Gastrocnemius medialis (tissue), 4 donors: ENCODE measurements at regions of chr17 and their contacts with region 1.

Region 1: DNA sequence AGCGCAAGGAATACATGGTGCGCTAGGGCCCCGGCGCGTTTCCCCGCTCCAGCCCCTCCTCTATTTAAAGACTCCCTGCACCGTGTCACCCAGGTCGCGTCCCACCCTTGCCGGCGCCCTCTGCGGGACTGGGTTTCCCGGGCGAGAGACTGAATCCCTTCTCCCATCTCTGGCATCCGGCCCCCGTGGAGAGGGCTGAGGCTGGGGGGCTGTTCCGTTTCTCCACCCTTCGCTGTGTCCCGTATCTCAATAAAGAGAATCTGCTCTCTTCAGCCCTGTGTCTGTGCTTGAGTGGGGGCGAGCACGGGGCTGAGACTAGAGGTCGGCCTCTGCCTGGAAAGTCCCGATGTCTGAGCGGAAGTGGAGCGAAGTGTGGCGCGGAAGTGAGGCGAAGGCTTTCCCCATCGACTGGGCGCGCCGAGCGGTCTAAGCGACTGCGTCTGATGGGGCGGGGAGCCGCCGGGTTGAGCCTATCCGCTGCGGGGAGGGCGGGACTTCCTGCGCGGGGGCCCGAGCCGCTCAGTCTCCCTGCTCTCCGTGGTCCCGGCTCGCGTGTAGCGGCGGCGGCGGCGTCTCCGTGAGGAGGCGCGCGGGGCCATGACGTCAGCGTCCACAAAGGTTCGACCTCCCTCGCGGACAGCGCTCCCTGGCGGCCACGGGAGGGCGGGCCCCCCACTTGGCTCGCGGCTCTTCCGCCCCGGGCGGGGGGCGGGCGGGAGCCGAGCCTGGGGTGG is 2.0 kb downstream of the RNASEK start:
- DNase-seq: peak; percentile 96 to 97
- ATAC-seq: peak; percentile 71 to 73
- H3K4me3 ChIP-seq: peak overlapping the region; percentile 77 to 99 (median 86)
- H3K27ac ChIP-seq: peak overlapping the region; percentile 93 to 99 (median 96)
- H3K4me1 ChIP-seq: peaks cover 50 to 62% of the 10 kb centered on the region in 2 donors
- H3K27me3 ChIP-seq: no peaks in the 10 kb centered on the region
- CTCF ChIP-seq: peak; percentile 64 to 95 (median 80)
- POLR2A ChIP-seq: peak; percentile 89 to 91

Region 2: GRCh38 chr17:6640536-6641373 is 373.7 kb before region 1 on chr17 and contains the starts of genes KIAA0753 and TXNDC17:
- in situ Hi-C with region 1: loop called in 1 of 4 experiments (anchors 25 kb)
- intact Hi-C with region 1: no loop called
- DNase-seq: peak; percentile 84 to 86
- ATAC-seq: peak; percentile 96
- H3K4me3 ChIP-seq: peak within 1 kb of the TSS; percentile 91 to 97 (median 93)
- H3K27ac ChIP-seq: peak within 1 kb of the TSS; percentile 72 to 90 (median 82)
- H3K4me1 ChIP-seq: peaks cover 10 to 22% of the 10 kb centered on the region in 2 donors
- H3K27me3 ChIP-seq: no peaks in the 10 kb centered on the region
- CTCF ChIP-seq: peak in 1 of 5 experiments; percentile 14
- POLR2A ChIP-seq: peak; percentile 66 to 69
- total RNA-seq, gene KIAA0753: 3.0 to 6.3 (median 3.6) TPM
- total RNA-seq, gene TXNDC17: 85.5 to 183 (median 106) TPM

Region 3: GRCh38 chr17:6651357-6651918 is 363.0 kb before region 1 on chr17 and contains the starts of genes C17orf100 and MED31:
- in situ Hi-C with region 1: loop called (anchors 25 kb)
- intact Hi-C with region 1: loop called (anchors 5 kb)
- DNase-seq: peak; percentile 88 to 94
- ATAC-seq: peak; percentile 93 to 96
- H3K4me3 ChIP-seq: peak within 1 kb of the TSS; percentile 60 to 95 (median 86)
- H3K27ac ChIP-seq: peak within 1 kb of the TSS; percentile 80 to 93 (median 86)
- H3K4me1 ChIP-seq: peaks cover 25 to 33% of the 10 kb centered on the region in 2 donors
- H3K27me3 ChIP-seq: peaks cover 12 to 18% (median 17%) of the 10 kb centered on the region in 3 donors
- CTCF ChIP-seq: no peak
- POLR2A ChIP-seq: peak; percentile 57 to 81
- total RNA-seq, gene C17orf100: 0.27 TPM in 1 of 4 donors, not detected in the others
- total RNA-seq, gene MED31: 3.8 to 8.6 (median 7.2) TPM

Region 4: DNA sequence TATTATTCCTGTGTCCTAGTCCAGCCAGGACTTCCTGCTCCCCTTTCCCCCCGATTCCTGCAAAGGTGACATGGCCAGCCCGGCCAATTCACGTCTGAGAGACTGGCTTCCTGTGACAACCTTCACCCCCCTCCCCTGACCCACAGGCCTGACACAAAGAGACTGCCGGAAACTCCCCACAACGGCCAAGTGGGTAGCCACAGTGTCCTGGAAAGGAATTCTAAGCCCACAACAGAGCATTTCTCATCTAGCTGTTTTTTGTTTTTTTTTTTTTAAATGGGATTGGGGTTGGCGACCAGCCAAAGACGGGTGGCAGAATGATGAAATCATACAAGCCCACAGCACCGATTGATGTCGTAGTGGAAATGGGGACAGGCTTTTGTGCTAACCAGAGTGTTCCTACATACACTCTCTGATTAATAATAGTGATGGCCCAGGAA is 261.4 kb before region 1 on chr17:
- in situ Hi-C with region 1: no loop called
- intact Hi-C with region 1: no loop called
- DNase-seq: peak; percentile 14 to 39
- ATAC-seq: peak; percentile 62 to 81
- H3K4me3 ChIP-seq: no peak overlapping the region
- H3K27ac ChIP-seq: peak overlapping the region; percentile 71 to 87 (median 82)
- H3K4me1 ChIP-seq: peaks cover 15 to 17% of the 10 kb centered on the region in 2 donors
- H3K27me3 ChIP-seq: no peaks in the 10 kb centered on the region
- CTCF ChIP-seq: no peak
- POLR2A ChIP-seq: no peak

Region 5: GRCh38 chr17:6936370-6937028 is 77.9 kb before region 1 on chr17:
- in situ Hi-C with region 1: no loop called
- intact Hi-C with region 1: loop called (anchors 1 kb)
- DNase-seq: peak; percentile 5 to 45
- ATAC-seq: peak; percentile 80 to 81
- H3K4me3 ChIP-seq: peak overlapping the region; percentile 48 to 63 (median 58)
- H3K27ac ChIP-seq: peak overlapping the region; percentile 58 to 76 (median 71)
- H3K4me1 ChIP-seq: peaks cover 0 to 11% of the 10 kb centered on the region in 2 donors
- H3K27me3 ChIP-seq: no peaks in the 10 kb centered on the region
- CTCF ChIP-seq: no peak
- POLR2A ChIP-seq: peak in 1 of 2 donors; percentile 26

Region 6: GRCh38 chr17:7572588-7573323 is 558.3 kb after region 1 on chr17:
- in situ Hi-C with region 1: no loop called
- intact Hi-C with region 1: loop called (anchors 10 kb)
- DNase-seq: peak; percentile 99 to 100
- ATAC-seq: peak; percentile 14 to 83
- H3K4me3 ChIP-seq: peak overlapping the region; percentile 90 to 100 (median 95)
- H3K27ac ChIP-seq: peak overlapping the region; percentile 98 to 100 (median 99)
- H3K4me1 ChIP-seq: peaks cover 37 to 42% of the 10 kb centered on the region in 2 donors
- H3K27me3 ChIP-seq: no peaks in the 10 kb centered on the region
- CTCF ChIP-seq: no peak
- POLR2A ChIP-seq: peak; percentile 98 to 99

Region 7: DNA sequence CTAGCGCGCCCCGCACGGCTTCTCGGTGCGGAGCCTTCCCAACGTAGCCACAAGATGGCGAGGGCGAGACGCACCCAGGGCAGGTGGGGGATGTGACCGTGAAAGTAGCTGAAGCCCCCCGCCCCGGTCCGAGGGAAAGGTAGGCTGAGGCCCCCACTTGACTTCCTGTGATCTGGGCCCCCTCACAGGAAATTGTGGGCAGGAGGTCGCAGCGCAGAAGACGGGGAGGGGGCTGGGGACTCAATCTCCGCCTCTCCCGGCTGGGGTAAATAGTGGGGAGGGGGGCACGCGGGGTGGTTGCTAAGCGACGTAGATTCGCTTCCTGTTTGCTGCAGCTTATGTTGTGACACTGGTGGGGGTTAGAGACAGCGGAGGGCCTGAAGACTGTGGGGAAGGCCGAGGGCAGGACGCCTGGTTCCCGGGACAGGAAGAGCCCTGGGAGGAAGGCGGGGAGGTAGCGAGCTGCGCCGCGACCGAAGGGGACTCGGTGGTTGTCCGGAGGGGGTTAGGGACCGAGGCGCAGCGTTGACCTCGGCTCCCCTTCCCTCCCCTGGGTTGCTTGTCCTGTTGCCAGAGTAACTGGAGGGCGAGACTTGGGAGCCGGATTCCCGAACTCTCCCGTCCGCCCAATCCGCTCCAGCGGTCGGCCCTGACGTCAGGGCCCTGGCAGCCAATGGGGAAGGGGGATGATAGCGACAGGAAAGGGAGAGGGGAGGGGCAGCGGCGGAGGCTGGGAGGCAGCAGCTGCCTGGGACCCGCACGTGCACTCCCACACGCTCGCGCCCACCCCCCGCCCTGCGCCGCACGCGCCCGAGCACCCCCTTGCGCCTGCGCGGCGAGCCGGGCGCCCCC is 820.8 kb after region 1 on chr17:
- in situ Hi-C with region 1: no loop called
- intact Hi-C with region 1: loop called (anchors 10 kb)
- DNase-seq: peak; percentile 97 to 98
- ATAC-seq: peak; percentile 65 to 74
- H3K4me3 ChIP-seq: peak overlapping the region; percentile 81 to 90 (median 85)
- H3K27ac ChIP-seq: peak overlapping the region; percentile 97 to 100 (median 100)
- H3K4me1 ChIP-seq: peaks cover 39 to 44% of the 10 kb centered on the region in 2 donors
- H3K27me3 ChIP-seq: no peaks in the 10 kb centered on the region
- CTCF ChIP-seq: peak; percentile 87 to 96 (median 88)
- POLR2A ChIP-seq: peak; percentile 84 to 94